PC-9 (cell line): ENCODE measurements at regions of chr19 and their contacts with region 1.

Region 1: DNA sequence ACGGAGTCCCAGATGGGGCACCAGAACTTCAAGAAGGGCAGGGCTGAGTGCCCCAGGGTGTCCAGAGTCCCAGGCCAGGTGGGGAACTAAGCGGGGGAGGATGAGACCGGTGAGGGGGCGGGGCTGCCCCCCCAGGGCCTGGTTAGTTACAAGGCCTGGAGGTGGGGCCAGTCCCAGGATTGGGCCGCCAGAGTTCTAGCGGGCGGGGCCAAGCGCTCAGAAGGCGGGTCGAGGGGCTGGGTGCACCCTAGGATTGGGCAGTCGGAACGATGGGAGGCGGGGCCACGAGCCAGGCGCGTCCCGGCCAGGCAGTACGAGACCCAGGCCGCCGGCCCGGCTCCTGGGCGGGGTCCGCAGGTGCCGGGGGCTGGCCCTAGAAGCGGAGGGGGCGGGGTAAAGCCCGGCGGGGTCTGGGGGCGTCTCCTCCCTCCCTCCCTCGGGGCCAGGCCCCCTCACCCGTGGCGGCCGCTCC is 571 bp downstream of the ZNF653 start:
- DNase-seq: peak; percentile 91 to 99
- H3K4me3 ChIP-seq: peak overlapping the region; percentile 81
- H3K27ac ChIP-seq: peak overlapping the region; percentile 67
- H3K4me1 ChIP-seq: peaks cover 11% of the 10 kb centered on the region
- H3K27me3 ChIP-seq: no peaks in the 10 kb centered on the region
- CTCF ChIP-seq: no peak

Region 2: GRCh38 chr19:11191273-11191755 is 313.8 kb before region 1 on chr19:
- CTCF ChIA-PET with region 1: no interaction called
- POLR2A ChIA-PET with region 1: no interaction called
- intact Hi-C with region 1: no loop called
- DNase-seq: peak; percentile 58 to 70
- H3K4me3 ChIP-seq: no peak overlapping the region
- H3K27ac ChIP-seq: no peak overlapping the region
- H3K4me1 ChIP-seq: 0 out of 2 replicates have a peak, but pooled peaks cover 2% of the 10 kb centered on the region
- H3K27me3 ChIP-seq: no peaks in the 10 kb centered on the region
- CTCF ChIP-seq: no peak

Region 3: GRCh38 chr19:11528551-11529341 is 23.7 kb after region 1 on chr19 and contains the start of gene ECSIT:
- CTCF ChIA-PET with region 1: no interaction called
- POLR2A ChIA-PET with region 1: no interaction called
- intact Hi-C with region 1: loop called (anchors 1 kb)
- DNase-seq: peak; percentile 97 to 99
- H3K4me3 ChIP-seq: peak within 1 kb of the TSS; percentile 70
- H3K27ac ChIP-seq: peak within 1 kb of the TSS; percentile 81
- H3K4me1 ChIP-seq: peaks cover 27% of the 10 kb centered on the region
- H3K27me3 ChIP-seq: no peaks in the 10 kb centered on the region
- CTCF ChIP-seq: no peak
- total RNA-seq, gene ECSIT: 42.4 and 43.0 TPM in 2 replicates

Region 4: GRCh38 chr19:11639602-11640471 is 134.8 kb after region 1 on chr19:
- CTCF ChIA-PET with region 1: no interaction called
- POLR2A ChIA-PET with region 1: no interaction called
- intact Hi-C with region 1: loop called (anchors 5 kb)
- DNase-seq: peak; percentile 94 to 97
- H3K4me3 ChIP-seq: peak overlapping the region; percentile 91
- H3K27ac ChIP-seq: no peak overlapping the region
- H3K4me1 ChIP-seq: no peaks in the 10 kb centered on the region
- H3K27me3 ChIP-seq: no peaks in the 10 kb centered on the region
- CTCF ChIP-seq: no peak